HepG2 (cell line): ENCODE measurements at regions of chr19 and their contacts with region 1.

Region 1: GRCh38 chr19:44856421-44857083 is 10.5 kb downstream of the NECTIN2 start:
- DNase-seq: peak; percentile 64
- ATAC-seq: peak; percentile 76
- H3K4me3 ChIP-seq: peak overlapping the region in 1 of 3 experiments; percentile 20; a peak in 1 of 6 replicates
- H3K27ac ChIP-seq: peak overlapping the region; percentile 72
- H3K4me1 ChIP-seq: peaks cover 69% of the 10 kb centered on the region
- H3K27me3 ChIP-seq: no peaks in the 10 kb centered on the region
- CTCF ChIP-seq: peak; percentile 29; the same call in 1 of the 2 replicates
- EP300 ChIP-seq: 0 out of 4 replicates have a peak, but pooled peaks of 1 of the 2 experiments have one; percentile 7
- POLR2A ChIP-seq: peak in 1 of 2 experiments; percentile 19; a peak in 1 of 4 replicates
- RAD21 ChIP-seq: no peak

Region 2: DNA sequence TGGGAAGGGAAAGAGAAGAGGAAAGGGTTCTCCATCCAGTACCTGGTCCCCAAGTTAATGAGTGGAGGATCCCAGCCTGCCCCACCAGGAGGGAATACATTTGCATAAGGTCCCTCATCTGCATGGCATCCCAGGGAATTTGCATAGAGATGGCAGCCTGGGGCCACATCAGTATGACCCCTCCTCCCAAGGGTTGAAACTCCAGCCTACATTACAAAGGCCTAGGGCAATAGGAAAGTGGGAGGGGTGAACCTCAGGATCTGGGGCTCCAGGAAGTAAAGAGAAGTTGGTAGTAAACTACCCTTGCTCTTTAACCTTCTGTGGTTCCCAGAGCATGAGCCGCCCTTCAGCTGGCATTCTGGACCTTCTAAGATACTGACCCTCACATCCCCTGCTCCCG is 17.3 kb before region 1 on chr19:
- CTCF ChIA-PET with region 1: no interaction called
- POLR2A ChIA-PET with region 1: no interaction called
- in situ Hi-C with region 1: no loop called
- intact Hi-C with region 1: no loop called
- DNase-seq: no peak
- ATAC-seq: peak; percentile 22; the same call in 1 of the 3 replicates
- H3K4me3 ChIP-seq: no peak overlapping the region
- H3K27ac ChIP-seq: no peak overlapping the region
- H3K4me1 ChIP-seq: peaks cover 16% of the 10 kb centered on the region
- H3K27me3 ChIP-seq: no peaks in the 10 kb centered on the region
- CTCF ChIP-seq: no peak
- EP300 ChIP-seq: no peak
- POLR2A ChIP-seq: no peak
- RAD21 ChIP-seq: no peak

Region 3: GRCh38 chr19:44869733-44870470 is 13.3 kb after region 1 on chr19:
- CTCF ChIA-PET with region 1: no interaction called
- POLR2A ChIA-PET with region 1: interaction called, 36 read pairs
- in situ Hi-C with region 1: no loop called
- intact Hi-C with region 1: no loop called
- DNase-seq: no peak
- ATAC-seq: peak; percentile 13; the same call in 1 of the 3 replicates
- H3K4me3 ChIP-seq: no peak overlapping the region; a peak in 1 of 6 replicates
- H3K27ac ChIP-seq: peak overlapping the region; percentile 64
- H3K4me1 ChIP-seq: peaks cover 59% of the 10 kb centered on the region
- H3K27me3 ChIP-seq: no peaks in the 10 kb centered on the region
- CTCF ChIP-seq: no peak
- EP300 ChIP-seq: no peak
- POLR2A ChIP-seq: no peak
- RAD21 ChIP-seq: no peak